ENCODE measurements at regions of chr7 and their contacts with region 1.

Region 1: DNA sequence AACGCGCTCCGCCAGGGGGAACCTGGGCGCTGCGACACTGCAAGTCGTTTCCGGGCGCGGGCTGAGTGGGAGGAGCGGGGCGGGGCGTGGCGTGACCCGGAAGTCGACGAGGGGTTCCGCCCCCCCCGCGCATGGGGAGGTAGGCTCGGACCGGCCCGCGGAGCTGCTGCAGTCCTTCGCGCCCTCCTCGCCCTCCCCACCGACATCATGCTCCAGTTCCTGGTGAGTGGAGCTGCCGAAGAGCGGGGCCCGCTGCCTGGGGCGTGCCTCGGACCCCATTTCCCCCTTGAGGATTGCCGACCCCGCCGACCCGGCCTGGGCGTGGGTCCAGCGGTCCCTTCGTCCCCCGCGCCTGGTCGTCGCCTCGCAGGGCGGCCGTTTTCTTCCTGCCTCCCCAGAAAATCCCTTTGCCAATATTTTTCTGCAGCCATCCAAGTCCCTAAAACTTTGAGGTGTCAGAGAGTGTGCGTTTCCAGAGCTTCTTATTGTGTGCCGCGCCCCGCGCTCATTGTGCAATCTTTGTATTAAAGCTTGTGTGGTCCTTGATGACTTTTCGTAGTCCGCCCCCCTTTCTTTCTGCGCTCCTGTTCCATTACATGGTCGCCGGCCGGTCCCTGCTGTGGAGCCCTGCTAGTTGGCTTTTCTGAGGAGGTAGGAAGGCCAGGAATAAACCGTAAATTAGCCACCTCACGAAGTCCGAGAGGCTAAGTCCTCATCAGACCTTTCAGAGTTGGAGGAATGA is at the start of gene STMP1:
- DNase-seq: peak; percentile 89 to 97 (median 94)
- ATAC-seq: peak; percentile 99
- H3K4me3 ChIP-seq: peak within 1 kb of the TSS; percentile 91
- H3K4me3 Mint-ChIP-seq: peak within 1 kb of the TSS; percentile 86 to 98 (median 94)
- H3K27ac ChIP-seq: peak within 1 kb of the TSS; percentile 82
- H3K27ac Mint-ChIP-seq: peak within 1 kb of the TSS; percentile 80 to 95 (median 93)
- H3K4me1 ChIP-seq: peaks cover 6 to 15% of the 10 kb centered on the region in 2 donors
- H3K4me1 Mint-ChIP-seq: peaks cover 32 to 49% (median 43%) of the 10 kb centered on the region in 7 donors
- H3K27me3 ChIP-seq: no peaks in the 10 kb centered on the region
- H3K27me3 Mint-ChIP-seq: no peaks in the 10 kb centered on the region
- total RNA-seq, gene STMP1: 18.0 to 33.0 (median 24.7) TPM

Region 2: DNA sequence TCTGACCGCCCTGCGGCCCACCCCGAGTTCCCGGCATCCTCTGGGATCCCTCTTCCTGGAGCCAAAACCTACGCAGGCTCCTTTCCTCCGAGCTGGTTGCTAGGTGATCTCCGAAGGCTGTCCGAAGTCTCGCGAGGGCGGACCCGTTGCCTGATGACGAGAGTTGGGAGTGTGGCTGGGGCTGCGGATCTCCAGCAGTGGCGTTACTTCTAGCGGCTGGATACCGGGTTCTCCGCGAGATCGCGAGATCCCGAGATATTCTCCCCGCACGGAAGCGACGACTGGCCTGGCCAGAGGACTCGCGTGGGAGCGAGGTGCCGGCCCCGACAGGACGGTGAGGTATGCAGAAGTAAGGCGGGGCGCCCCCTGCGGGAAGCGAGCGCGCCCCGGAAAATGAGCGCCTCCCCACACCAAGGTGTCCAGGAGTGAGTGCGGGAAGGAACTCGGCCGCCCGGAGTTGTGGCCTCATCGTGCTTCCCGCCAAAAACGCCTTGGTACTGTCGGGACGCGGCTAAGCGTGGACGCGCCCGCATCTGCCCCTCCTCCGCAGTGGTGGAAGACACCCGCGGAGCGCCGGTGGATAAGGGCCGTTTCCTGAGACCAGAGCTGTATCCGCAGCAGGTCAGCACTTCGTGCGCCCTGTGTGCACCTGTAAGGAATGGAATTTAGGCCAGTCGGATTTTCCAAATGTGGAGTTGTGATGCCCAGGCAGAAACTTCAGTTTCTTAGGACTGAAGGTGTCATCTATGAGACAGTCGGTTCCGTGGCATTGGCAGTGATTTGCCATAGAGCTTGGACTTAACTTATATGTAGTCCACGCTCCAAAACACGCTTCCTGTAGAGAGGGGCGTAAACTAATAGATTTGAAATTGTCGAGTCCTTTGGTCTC is 675.9 kb before region 1 on chr7 and contains the start of gene AGBL3:
- CTCF ChIA-PET with region 1: no interaction called
- POLR2A ChIA-PET with region 1: no interaction called
- intact Hi-C with region 1: loop called in 1 of 2 experiments (anchors 2 kb)
- DNase-seq: peak; percentile 80 to 92 (median 89)
- ATAC-seq: peak; percentile 94
- H3K4me3 ChIP-seq: peak within 1 kb of the TSS; percentile 92
- H3K4me3 Mint-ChIP-seq: peak within 1 kb of the TSS; percentile 93 to 100 (median 98)
- H3K27ac ChIP-seq: peak within 1 kb of the TSS; percentile 96
- H3K27ac Mint-ChIP-seq: peak within 1 kb of the TSS; percentile 97 to 100 (median 99)
- H3K4me1 ChIP-seq: no peaks in the 10 kb centered on the region
- H3K4me1 Mint-ChIP-seq: peaks cover 20 to 61% (median 52%) of the 10 kb centered on the region in 7 donors
- H3K27me3 ChIP-seq: no peaks in the 10 kb centered on the region
- H3K27me3 Mint-ChIP-seq: no peaks in the 10 kb centered on the region
- total RNA-seq, gene AGBL3: 2.1 to 6.6 (median 3.8) TPM

Region 3: DNA sequence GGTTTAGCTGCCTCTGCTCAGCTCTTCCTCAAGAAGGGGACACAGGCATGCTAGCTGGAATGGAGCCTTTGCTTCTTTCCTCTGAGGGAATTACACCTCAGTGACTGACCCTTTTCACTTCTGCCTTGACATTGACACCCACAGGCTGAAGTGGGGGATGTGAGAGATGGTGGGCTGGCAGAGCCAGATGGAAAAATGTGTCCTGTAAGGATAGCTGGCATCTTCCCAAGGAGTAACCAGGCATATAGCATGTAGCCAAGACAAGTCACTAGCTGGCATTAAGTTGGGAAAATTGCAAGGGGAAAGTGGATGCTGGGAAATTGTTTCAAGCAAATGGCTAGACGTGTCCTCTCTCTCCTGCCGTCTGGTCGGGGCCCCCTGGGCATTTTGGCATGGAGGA is 19.6 kb after region 1 on chr7:
- CTCF ChIA-PET with region 1: interaction called, 3 read pairs
- POLR2A ChIA-PET with region 1: no interaction called
- intact Hi-C with region 1: loop called in 1 of 2 experiments (anchors 2 kb)
- DNase-seq: no peak
- ATAC-seq: no peak
- H3K4me3 ChIP-seq: no peak overlapping the region
- H3K4me3 Mint-ChIP-seq: no peak overlapping the region
- H3K27ac ChIP-seq: no peak overlapping the region
- H3K27ac Mint-ChIP-seq: peak overlapping the region in 1 of 9 donors; percentile 24
- H3K4me1 ChIP-seq: no peaks in the 10 kb centered on the region
- H3K4me1 Mint-ChIP-seq: peaks cover 0 to 8% (median 2%) of the 10 kb centered on the region in 7 donors
- H3K27me3 ChIP-seq: no peaks in the 10 kb centered on the region
- H3K27me3 Mint-ChIP-seq: peaks cover 0 to 2% (median 0%) of the 10 kb centered on the region in 5 donors

Region 4: DNA sequence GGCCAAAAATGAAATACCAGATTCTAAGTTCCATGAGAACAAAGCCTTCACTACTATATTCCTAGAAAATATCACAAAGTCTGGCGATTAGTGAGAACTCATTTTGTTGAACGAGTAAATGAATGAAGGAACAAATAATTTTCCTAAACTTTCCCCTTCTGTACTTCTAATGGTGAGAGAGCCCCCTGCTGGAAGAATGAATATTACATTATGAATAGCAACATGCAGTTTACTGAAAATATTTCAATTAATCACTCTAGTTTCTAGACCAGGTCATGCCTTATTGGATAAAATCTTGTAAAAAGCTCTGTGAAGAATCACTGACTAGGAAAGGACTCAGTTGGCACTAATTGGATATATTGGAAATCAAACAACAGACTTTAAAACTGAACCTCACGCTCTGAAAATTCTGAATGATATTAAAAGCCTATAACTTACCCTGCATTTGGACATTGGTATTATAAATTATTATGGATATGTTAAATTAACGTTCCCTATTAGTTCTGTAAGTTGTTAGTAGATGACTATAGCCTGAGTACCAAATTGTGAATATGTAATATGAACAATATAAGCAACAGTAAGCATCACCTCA is 347.0 kb after region 1 on chr7:
- CTCF ChIA-PET with region 1: interaction called, 6 read pairs
- POLR2A ChIA-PET with region 1: interaction called, 3 read pairs
- intact Hi-C with region 1: loop called in 1 of 2 experiments (anchors 1 kb)
- DNase-seq: peak in 7 of 9 donors; percentile 13 to 51 (median 40)
- ATAC-seq: peak; percentile 45
- H3K4me3 ChIP-seq: no peak overlapping the region
- H3K4me3 Mint-ChIP-seq: no peak overlapping the region
- H3K27ac ChIP-seq: no peak overlapping the region
- H3K27ac Mint-ChIP-seq: no peak overlapping the region
- H3K4me1 ChIP-seq: no peaks in the 10 kb centered on the region
- H3K4me1 Mint-ChIP-seq: peaks cover 0 to 10% (median 6%) of the 10 kb centered on the region in 7 donors
- H3K27me3 ChIP-seq: no peaks in the 10 kb centered on the region
- H3K27me3 Mint-ChIP-seq: peaks cover 3 to 22% (median 9%) of the 10 kb centered on the region in 5 donors

Measured in naive thymus-derived CD4-positive, alpha-beta T cell (primary cell).